ENCODE measurements at regions of chr2 and their contacts with region 1.

Region 1: GRCh38 chr2:137261858-137262585 is 496.7 kb downstream of the THSD7B start:
- DNase-seq: no peak
- ATAC-seq: no peak
- H3K4me3 ChIP-seq: no peak overlapping the region
- H3K4me3 Mint-ChIP-seq: no peak overlapping the region
- H3K27ac ChIP-seq: no peak overlapping the region
- H3K27ac Mint-ChIP-seq: no peak overlapping the region
- H3K4me1 ChIP-seq: no peaks in the 10 kb centered on the region
- H3K4me1 Mint-ChIP-seq: no peaks in the 10 kb centered on the region
- H3K27me3 ChIP-seq: no peaks in the 10 kb centered on the region
- H3K27me3 Mint-ChIP-seq: no peaks in the 10 kb centered on the region
- CTCF ChIP-seq: no peak

Region 2: DNA sequence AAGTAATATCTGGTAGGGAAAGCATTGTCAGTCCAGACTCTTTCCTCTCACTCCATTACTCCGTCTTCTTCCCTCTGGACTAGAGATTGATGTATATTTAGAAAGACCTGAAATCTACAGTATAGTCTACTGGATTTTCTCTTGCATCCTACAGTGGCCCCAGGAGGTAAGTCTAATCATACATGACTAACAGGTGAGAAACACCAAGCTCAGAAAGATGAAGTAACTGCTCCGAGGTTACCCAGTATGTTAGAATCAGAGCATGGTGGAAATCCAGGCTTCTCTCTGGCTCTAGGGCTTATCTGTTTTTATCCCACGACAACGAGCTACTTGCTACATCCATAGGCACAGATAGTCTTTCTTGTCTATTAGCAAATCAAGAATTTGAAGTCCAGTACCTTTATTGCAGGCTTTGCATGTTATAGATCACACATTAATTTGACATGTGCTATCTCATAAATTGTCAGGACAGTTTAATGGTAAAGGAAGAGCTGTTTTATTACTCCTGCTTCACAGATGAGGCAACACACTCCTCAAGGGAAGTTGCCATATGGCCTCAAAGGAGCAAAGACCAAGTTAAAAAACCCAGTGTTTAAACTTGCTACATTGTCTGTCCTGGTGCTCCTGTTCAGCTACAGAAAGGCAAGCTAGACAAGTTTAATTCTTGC is 12.4 kb before region 1 on chr2:
- CTCF ChIA-PET with region 1: no interaction called
- POLR2A ChIA-PET with region 1: no interaction called
- intact Hi-C with region 1: no loop called
- DNase-seq: no peak
- ATAC-seq: no peak
- H3K4me3 ChIP-seq: no peak overlapping the region
- H3K4me3 Mint-ChIP-seq: no peak overlapping the region
- H3K27ac ChIP-seq: no peak overlapping the region
- H3K27ac Mint-ChIP-seq: no peak overlapping the region
- H3K4me1 ChIP-seq: no peaks in the 10 kb centered on the region
- H3K4me1 Mint-ChIP-seq: no peaks in the 10 kb centered on the region
- H3K27me3 ChIP-seq: no peaks in the 10 kb centered on the region
- H3K27me3 Mint-ChIP-seq: no peaks in the 10 kb centered on the region
- CTCF ChIP-seq: no peak

Region 3: GRCh38 chr2:137316075-137316474 is 54.1 kb after region 1 on chr2:
- CTCF ChIA-PET with region 1: no interaction called
- POLR2A ChIA-PET with region 1: no interaction called
- intact Hi-C with region 1: loop called in 1 of 2 experiments (anchors 2 kb)
- DNase-seq: no peak
- ATAC-seq: no peak
- H3K4me3 ChIP-seq: no peak overlapping the region
- H3K4me3 Mint-ChIP-seq: no peak overlapping the region
- H3K27ac ChIP-seq: no peak overlapping the region
- H3K27ac Mint-ChIP-seq: no peak overlapping the region
- H3K4me1 ChIP-seq: no peaks in the 10 kb centered on the region
- H3K4me1 Mint-ChIP-seq: no peaks in the 10 kb centered on the region
- H3K27me3 ChIP-seq: no peaks in the 10 kb centered on the region
- H3K27me3 Mint-ChIP-seq: no peaks in the 10 kb centered on the region
- CTCF ChIP-seq: no peak

Measured in CD8-positive, alpha-beta T cell (primary cell).